Naive thymus-derived CD4-positive, alpha-beta T cell (primary cell): ENCODE measurements at regions of chr3 and their contacts with region 1.

Region 1: DNA sequence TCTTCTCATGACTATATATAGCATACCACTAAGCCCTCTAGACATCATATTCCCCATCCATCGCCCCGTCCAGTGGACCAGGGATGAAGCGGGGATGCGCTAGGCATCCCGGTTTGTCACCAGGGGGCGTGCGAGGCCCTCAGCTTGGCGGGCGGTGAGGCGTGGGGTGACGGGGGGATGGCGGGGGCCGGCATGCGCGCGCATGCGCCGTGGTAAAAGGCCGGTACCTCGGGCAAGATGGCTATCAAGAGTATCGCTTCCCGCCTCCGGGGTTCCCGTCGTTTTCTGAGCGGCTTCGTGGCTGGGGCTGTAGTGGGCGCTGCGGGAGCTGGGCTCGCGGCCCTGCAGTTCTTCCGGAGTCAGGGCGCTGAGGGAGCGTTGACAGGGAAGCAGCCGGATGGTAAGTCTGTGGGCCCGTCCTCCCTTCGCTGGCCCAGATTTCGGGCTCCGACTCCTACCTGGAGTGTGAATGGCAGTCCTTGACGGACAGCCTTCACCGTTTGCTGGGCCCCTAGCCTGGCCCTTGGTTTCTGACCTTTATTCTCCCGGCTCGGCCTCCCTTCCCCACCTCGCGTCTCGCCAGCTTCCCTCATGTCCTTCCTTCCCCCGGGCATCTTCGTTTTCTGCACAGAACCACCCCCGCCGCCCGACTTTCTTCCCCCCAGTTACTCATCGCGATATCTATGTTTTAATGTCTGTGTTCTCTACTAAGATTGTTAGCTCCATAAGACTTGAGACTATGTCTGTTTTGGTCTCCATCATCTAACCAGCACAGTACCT is at the start of gene EXOG:
- DNase-seq: peak; percentile 79 to 93 (median 89)
- ATAC-seq: peak; percentile 98
- H3K4me3 ChIP-seq: peak within 1 kb of the TSS; percentile 92
- H3K4me3 Mint-ChIP-seq: peak within 1 kb of the TSS; percentile 82 to 98 (median 95)
- H3K27ac ChIP-seq: peak within 1 kb of the TSS; percentile 75
- H3K27ac Mint-ChIP-seq: peak within 1 kb of the TSS; percentile 20 to 94 (median 86)
- H3K4me1 ChIP-seq: peaks cover 0 to 8% of the 10 kb centered on the region in 2 donors
- H3K4me1 Mint-ChIP-seq: peaks cover 4 to 29% (median 24%) of the 10 kb centered on the region in 7 donors
- H3K27me3 ChIP-seq: no peaks in the 10 kb centered on the region
- H3K27me3 Mint-ChIP-seq: no peaks in the 10 kb centered on the region
- total RNA-seq, gene EXOG: 20.4 to 31.0 (median 21.3) TPM

Region 2: GRCh38 chr3:38164966-38165680 is 331.2 kb before region 1 on chr3 and contains the start of gene OXSR1:
- CTCF ChIA-PET with region 1: no interaction called
- POLR2A ChIA-PET with region 1: interaction called, 4 read pairs
- intact Hi-C with region 1: loop called in 1 of 2 experiments (anchors 1 kb)
- DNase-seq: peak; percentile 94 to 99 (median 98)
- ATAC-seq: peak; percentile 93
- H3K4me3 ChIP-seq: peak within 1 kb of the TSS; percentile 84
- H3K4me3 Mint-ChIP-seq: peak within 1 kb of the TSS; percentile 90 to 98 (median 96)
- H3K27ac ChIP-seq: peak within 1 kb of the TSS; percentile 98
- H3K27ac Mint-ChIP-seq: peak within 1 kb of the TSS; percentile 99 to 100 (median 100)
- H3K4me1 ChIP-seq: peaks cover 18 to 22% of the 10 kb centered on the region in 2 donors
- H3K4me1 Mint-ChIP-seq: peaks cover 25 to 49% (median 44%) of the 10 kb centered on the region in 7 donors
- H3K27me3 ChIP-seq: no peaks in the 10 kb centered on the region
- H3K27me3 Mint-ChIP-seq: peaks cover 0 to 6% (median 0%) of the 10 kb centered on the region in 5 donors
- total RNA-seq, gene OXSR1: 35.0 to 59.7 (median 38.8) TPM

Region 3: GRCh38 chr3:38453075-38453912 is 43.0 kb before region 1 on chr3 and contains the start of gene ACVR2B:
- CTCF ChIA-PET with region 1: no interaction called
- POLR2A ChIA-PET with region 1: no interaction called
- intact Hi-C with region 1: loop called (anchors 1 kb)
- DNase-seq: peak; percentile 20 to 83 (median 58)
- ATAC-seq: peak; percentile 74
- H3K4me3 ChIP-seq: peak within 1 kb of the TSS; percentile 74
- H3K4me3 Mint-ChIP-seq: peak within 1 kb of the TSS; percentile 88 to 99 (median 97)
- H3K27ac ChIP-seq: peak within 1 kb of the TSS; percentile 60
- H3K27ac Mint-ChIP-seq: peak within 1 kb of the TSS; percentile 59 to 95 (median 91)
- H3K4me1 ChIP-seq: peaks cover 5 to 12% of the 10 kb centered on the region in 2 donors
- H3K4me1 Mint-ChIP-seq: peaks cover 7 to 32% (median 25%) of the 10 kb centered on the region in 7 donors
- H3K27me3 ChIP-seq: no peaks in the 10 kb centered on the region
- H3K27me3 Mint-ChIP-seq: peaks cover 0 to 18% (median 0%) of the 10 kb centered on the region in 5 donors
- total RNA-seq, gene ACVR2B: 3.8 to 14.0 (median 8.3) TPM

Region 4: GRCh38 chr3:38651154-38651789 is 155.0 kb after region 1 on chr3:
- CTCF ChIA-PET with region 1: interaction called, 10 read pairs
- POLR2A ChIA-PET with region 1: interaction called, 7 read pairs
- intact Hi-C with region 1: loop called (anchors 1 kb)
- DNase-seq: peak; percentile 38 to 73 (median 66)
- ATAC-seq: peak; percentile 73
- H3K4me3 ChIP-seq: peak overlapping the region; percentile 34
- H3K4me3 Mint-ChIP-seq: no peak overlapping the region
- H3K27ac ChIP-seq: no peak overlapping the region
- H3K27ac Mint-ChIP-seq: no peak overlapping the region
- H3K4me1 ChIP-seq: peaks cover 5 to 6% of the 10 kb centered on the region in 2 donors
- H3K4me1 Mint-ChIP-seq: peaks cover 0 to 10% (median 8%) of the 10 kb centered on the region in 7 donors
- H3K27me3 ChIP-seq: peaks cover 10 to 11% of the 10 kb centered on the region in 2 donors
- H3K27me3 Mint-ChIP-seq: peaks cover 4 to 23% (median 16%) of the 10 kb centered on the region in 5 donors

Region 5: DNA sequence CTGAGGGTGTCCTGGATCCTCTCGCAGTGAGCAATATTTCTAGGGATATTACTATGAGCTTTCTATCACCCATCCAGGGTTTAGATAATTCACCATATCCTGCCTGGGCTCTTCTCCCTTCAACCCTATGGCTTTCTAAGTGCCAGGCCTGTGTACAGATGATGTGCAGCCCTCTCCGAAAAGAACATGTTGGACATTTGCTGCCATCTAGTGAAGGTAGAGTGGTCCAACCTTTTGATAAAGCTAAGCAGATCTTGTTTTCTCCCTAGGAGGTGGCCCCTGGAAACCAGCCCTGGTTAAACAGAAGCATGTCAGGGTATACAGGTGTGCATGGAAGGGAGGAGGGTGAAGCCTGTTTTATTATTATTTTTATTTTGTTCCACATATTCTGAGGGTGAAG is 347.6 kb after region 1 on chr3:
- CTCF ChIA-PET with region 1: no interaction called
- POLR2A ChIA-PET with region 1: no interaction called
- intact Hi-C with region 1: loop called in 1 of 2 experiments (anchors 1 kb)
- DNase-seq: no peak
- ATAC-seq: no peak
- H3K4me3 ChIP-seq: no peak overlapping the region
- H3K4me3 Mint-ChIP-seq: no peak overlapping the region
- H3K27ac ChIP-seq: no peak overlapping the region
- H3K27ac Mint-ChIP-seq: no peak overlapping the region
- H3K4me1 ChIP-seq: no peaks in the 10 kb centered on the region
- H3K4me1 Mint-ChIP-seq: peaks cover 0 to 2% (median 0%) of the 10 kb centered on the region in 7 donors
- H3K27me3 ChIP-seq: no peaks in the 10 kb centered on the region
- H3K27me3 Mint-ChIP-seq: peaks cover 29 to 36% (median 31%) of the 10 kb centered on the region in 5 donors

Region 6: GRCh38 chr3:39013289-39013688 is 517.0 kb after region 1 on chr3:
- CTCF ChIA-PET with region 1: no interaction called
- POLR2A ChIA-PET with region 1: no interaction called
- intact Hi-C with region 1: no loop called
- DNase-seq: no peak
- ATAC-seq: no peak
- H3K4me3 ChIP-seq: no peak overlapping the region
- H3K4me3 Mint-ChIP-seq: no peak overlapping the region
- H3K27ac ChIP-seq: no peak overlapping the region
- H3K27ac Mint-ChIP-seq: no peak overlapping the region
- H3K4me1 ChIP-seq: no peaks in the 10 kb centered on the region
- H3K4me1 Mint-ChIP-seq: peaks cover 0 to 3% (median 0%) of the 10 kb centered on the region in 7 donors
- H3K27me3 ChIP-seq: no peaks in the 10 kb centered on the region
- H3K27me3 Mint-ChIP-seq: peaks cover 11 to 36% (median 22%) of the 10 kb centered on the region in 5 donors

Region 7: DNA sequence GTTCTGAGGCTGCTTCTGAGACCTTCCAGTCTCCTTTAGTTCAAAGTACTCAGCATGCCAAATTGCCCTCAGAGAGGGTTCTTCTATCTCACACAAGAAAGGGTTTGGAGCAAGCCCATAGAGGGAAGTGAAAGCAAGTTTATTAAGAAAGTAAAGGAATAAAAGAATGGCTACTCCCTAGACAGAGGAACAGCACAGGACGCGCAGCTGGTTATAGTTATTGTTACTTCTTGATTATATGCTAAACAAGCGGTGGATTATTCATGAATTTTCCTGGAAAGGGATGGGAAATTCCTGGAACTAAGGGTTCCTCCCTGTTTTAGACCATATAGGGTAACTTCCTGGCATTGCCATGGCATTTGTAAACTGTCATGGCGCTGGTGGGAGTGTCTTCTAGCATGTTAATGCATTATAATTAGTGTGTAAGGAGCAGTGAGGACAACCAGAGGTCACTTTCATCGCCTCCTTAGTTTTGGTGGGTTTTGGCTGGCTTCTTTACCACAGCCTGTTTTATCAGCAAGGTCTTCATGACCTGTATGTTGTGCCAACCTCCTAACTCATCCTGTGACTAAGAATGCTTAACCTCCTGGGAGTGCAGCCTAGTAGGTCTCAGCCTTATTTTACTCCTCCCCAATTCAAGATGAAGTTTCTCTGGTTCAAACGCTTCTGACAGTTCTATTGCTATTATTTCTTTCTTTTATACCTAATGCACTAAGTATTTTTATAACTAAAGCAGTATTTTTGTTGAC is 529.1 kb after region 1 on chr3:
- CTCF ChIA-PET with region 1: no interaction called
- POLR2A ChIA-PET with region 1: no interaction called
- intact Hi-C with region 1: loop called in 1 of 2 experiments (anchors 1 kb)
- DNase-seq: no peak
- ATAC-seq: no peak
- H3K4me3 ChIP-seq: no peak overlapping the region
- H3K4me3 Mint-ChIP-seq: no peak overlapping the region
- H3K27ac ChIP-seq: no peak overlapping the region
- H3K27ac Mint-ChIP-seq: no peak overlapping the region
- H3K4me1 ChIP-seq: no peaks in the 10 kb centered on the region
- H3K4me1 Mint-ChIP-seq: peaks cover 0 to 9% (median 0%) of the 10 kb centered on the region in 7 donors
- H3K27me3 ChIP-seq: no peaks in the 10 kb centered on the region
- H3K27me3 Mint-ChIP-seq: peaks cover 5 to 25% (median 11%) of the 10 kb centered on the region in 5 donors

Region 8: DNA sequence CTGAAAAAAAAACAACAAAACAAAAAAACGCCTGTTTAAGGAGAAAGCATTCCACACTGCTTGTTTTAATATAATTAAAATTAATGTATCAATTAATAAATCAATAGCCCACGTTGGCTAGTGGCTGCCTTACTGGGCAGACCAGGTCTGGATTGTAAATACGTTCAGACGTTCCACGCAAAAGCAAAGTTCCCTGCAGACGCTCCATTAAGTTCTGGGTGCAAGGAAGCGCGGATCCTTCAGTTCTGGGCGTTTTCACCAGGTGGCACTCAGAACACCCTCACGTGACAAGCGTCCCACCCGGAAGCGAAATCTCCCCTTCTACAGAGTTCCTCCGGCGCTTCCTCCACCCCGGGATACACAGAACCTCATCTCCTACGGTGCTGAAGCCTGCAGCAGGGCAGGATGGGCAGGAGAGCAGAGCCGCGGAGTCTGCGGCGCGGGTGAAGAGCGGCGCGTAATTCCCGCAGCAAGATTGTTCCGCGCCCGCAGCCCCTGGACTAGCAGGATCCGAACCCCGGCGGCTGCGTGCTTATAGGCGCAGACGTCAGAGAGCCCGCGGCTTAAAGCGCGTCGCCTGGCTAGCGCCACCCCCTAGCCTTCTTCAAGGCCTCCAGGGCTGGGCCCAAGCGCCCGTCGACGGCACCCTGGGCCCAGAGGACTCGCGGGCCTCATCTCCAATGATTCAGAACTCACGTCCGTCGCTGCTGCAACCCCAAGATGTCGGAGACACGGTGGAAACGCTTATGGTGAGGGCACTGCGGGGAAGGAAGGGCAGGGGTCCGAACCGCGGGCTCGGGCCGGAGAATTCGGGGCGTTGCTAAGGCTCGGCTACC is 886.9 kb after region 1 on chr3 and contains the start of gene SLC25A38:
- CTCF ChIA-PET with region 1: no interaction called
- POLR2A ChIA-PET with region 1: no interaction called
- intact Hi-C with region 1: loop called in 1 of 2 experiments (anchors 10 kb)
- DNase-seq: peak; percentile 60 to 86 (median 84)
- ATAC-seq: peak; percentile 86
- H3K4me3 ChIP-seq: peak within 1 kb of the TSS; percentile 88
- H3K4me3 Mint-ChIP-seq: peak within 1 kb of the TSS; percentile 91 to 99 (median 97)
- H3K27ac ChIP-seq: peak within 1 kb of the TSS; percentile 96
- H3K27ac Mint-ChIP-seq: peak within 1 kb of the TSS; percentile 95 to 100 (median 99)
- H3K4me1 ChIP-seq: peaks cover 26 to 39% of the 10 kb centered on the region in 2 donors
- H3K4me1 Mint-ChIP-seq: peaks cover 36 to 59% (median 49%) of the 10 kb centered on the region in 7 donors
- H3K27me3 ChIP-seq: no peaks in the 10 kb centered on the region
- H3K27me3 Mint-ChIP-seq: no peaks in the 10 kb centered on the region
- total RNA-seq, gene SLC25A38: 30.3 to 50.2 (median 46.8) TPM